ENCODE measurements at regions of chr6 and their contacts with region 1.

Region 1: DNA sequence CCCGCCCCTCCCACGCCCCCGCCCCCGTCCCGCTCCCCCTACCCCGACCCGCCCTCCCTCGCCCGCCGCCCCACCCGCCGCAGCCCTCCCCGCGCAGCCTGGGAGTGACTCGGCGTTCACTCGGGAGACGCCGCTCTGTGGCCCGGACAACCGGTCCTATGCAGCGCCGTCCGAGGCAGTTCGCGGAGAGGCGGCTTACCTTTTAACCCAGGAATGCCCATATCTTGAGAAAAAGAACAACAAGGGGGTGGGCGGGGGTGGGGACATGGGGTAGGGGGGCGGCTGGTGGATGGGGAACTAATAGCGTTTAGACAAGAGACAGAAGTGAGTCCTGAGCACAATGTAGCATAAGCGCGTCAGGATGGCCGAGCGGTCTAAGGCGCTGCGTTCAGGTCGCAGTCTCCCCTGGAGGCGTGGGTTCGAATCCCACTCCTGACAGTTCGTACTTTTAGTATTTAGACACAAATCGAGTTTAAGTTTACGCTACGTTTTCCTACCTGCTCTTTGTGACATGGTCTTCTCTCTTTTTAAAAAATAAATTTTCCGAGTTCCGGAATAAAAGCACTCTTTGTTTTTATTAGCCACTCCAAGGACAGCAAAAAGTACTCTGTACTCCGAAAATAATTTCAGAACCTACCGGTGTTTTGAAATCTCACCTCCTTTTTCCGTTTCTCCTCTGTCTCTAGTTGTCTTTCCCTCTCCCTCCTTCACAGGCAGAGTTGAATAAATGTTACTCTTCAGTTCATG is 17.1 kb upstream of the HMGN4 start:
- DNase-seq: peak; percentile 91
- H3K4me3 ChIP-seq: peak overlapping the region; percentile 72
- H3K27ac ChIP-seq: peak overlapping the region; percentile 84
- H3K4me1 ChIP-seq: peaks cover 36% of the 10 kb centered on the region
- CTCF ChIP-seq: no peak

Region 2: GRCh38 chr6:26457806-26458688 is 63.0 kb before region 1 on chr6 and contains the start of gene BTN2A1:
- CTCF ChIA-PET with region 1: no interaction called
- POLR2A ChIA-PET with region 1: no interaction called
- intact Hi-C with region 1: loop called (anchors 2 kb)
- DNase-seq: peak; percentile 91
- H3K4me3 ChIP-seq: peak within 1 kb of the TSS; percentile 76
- H3K27ac ChIP-seq: peak within 1 kb of the TSS; percentile 54
- H3K4me1 ChIP-seq: peaks cover 48% of the 10 kb centered on the region
- CTCF ChIP-seq: peak; percentile 49
- total RNA-seq, gene BTN2A1: 15.4 and 22.8 TPM in 2 replicates

Region 3: GRCh38 chr6:26473758-26474438 is 47.1 kb before region 1 on chr6:
- CTCF ChIA-PET with region 1: interaction called, 3 read pairs
- POLR2A ChIA-PET with region 1: interaction called, 6 read pairs
- intact Hi-C with region 1: loop called (anchors 2 kb)
- DNase-seq: peak; percentile 95
- H3K4me3 ChIP-seq: peak overlapping the region; percentile 73
- H3K27ac ChIP-seq: peak overlapping the region; percentile 96
- H3K4me1 ChIP-seq: peaks cover 55% of the 10 kb centered on the region
- CTCF ChIP-seq: no peak

Region 4: DNA sequence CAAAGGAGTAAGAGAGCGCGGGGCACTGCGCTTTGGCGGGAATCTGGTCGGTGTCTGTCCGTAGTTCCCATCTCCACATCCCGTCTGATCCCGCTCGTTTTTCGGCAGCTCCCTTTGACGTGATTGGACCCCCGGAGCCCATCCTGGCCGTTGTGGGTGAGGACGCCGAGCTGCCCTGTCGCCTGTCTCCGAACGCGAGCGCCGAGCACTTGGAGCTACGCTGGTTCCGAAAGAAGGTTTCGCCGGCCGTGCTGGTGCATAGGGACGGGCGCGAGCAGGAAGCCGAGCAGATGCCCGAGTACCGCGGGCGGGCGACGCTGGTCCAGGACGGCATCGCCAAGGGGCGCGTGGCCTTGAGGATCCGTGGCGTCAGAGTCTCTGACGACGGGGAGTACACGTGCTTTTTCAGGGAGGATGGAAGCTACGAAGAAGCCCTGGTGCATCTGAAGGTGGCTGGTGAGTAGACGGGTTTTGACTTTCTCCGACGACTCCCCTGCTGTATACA is 19.5 kb before region 1 on chr6:
- CTCF ChIA-PET with region 1: interaction called, 4 read pairs
- POLR2A ChIA-PET with region 1: interaction called, 21 read pairs
- intact Hi-C with region 1: no loop called
- DNase-seq: no peak
- H3K4me3 ChIP-seq: peak overlapping the region; percentile 53
- H3K27ac ChIP-seq: peak overlapping the region; percentile 98
- H3K4me1 ChIP-seq: peaks cover 68% of the 10 kb centered on the region
- CTCF ChIP-seq: no peak

Region 5: GRCh38 chr6:26532699-26533531 is 11.9 kb after region 1 on chr6:
- CTCF ChIA-PET with region 1: interaction called, 3 read pairs
- POLR2A ChIA-PET with region 1: interaction called, 11 read pairs
- intact Hi-C with region 1: loop called (anchors 1 kb)
- DNase-seq: peak; percentile 90
- H3K4me3 ChIP-seq: peak overlapping the region; percentile 69
- H3K27ac ChIP-seq: peak overlapping the region; percentile 93
- H3K4me1 ChIP-seq: peaks cover 47% of the 10 kb centered on the region
- CTCF ChIP-seq: no peak

Region 6: DNA sequence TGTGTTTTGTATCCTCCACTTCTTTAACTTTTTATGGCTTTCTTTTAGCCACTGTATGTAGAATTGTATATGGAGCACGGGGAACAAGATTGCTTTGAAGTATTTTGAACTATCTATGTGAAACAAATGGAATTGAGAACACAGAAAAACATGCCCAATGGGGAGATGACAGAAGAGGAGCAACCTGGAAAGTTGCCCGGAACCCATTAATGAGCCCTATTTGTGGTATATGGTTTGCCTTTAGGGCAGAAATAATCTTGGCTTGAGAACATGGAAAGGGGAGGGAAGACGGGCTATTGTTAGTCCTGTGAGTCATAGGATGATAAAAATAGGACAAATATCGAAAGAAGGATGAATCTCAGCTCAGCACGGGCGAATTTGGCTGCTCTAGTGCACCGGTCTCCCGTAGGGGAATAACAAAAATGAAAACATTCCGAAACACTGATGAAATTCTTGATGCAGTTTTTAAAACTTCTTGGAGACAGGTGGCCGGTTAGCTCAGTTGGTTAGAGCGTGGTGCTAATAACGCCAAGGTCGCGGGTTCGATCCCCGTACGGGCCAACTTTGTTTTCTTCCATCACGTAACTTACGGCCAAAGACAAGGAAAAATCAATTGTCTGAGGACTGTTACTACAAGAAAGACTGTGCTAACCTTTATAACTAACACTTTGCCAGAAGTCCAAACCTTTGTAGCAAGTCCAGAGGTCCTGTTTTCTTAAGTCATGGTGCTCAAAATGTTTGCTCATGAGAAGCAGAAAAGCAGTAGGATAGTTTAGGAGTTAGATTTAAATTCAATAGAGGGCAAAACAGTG is 32.8 kb after region 1 on chr6:
- CTCF ChIA-PET with region 1: no interaction called
- POLR2A ChIA-PET with region 1: interaction called, 3 read pairs
- intact Hi-C with region 1: loop called (anchors 1 kb)
- DNase-seq: peak; percentile 84
- H3K4me3 ChIP-seq: peak overlapping the region; percentile 80
- H3K27ac ChIP-seq: peak overlapping the region; percentile 91
- H3K4me1 ChIP-seq: peaks cover 62% of the 10 kb centered on the region
- CTCF ChIP-seq: no peak

Region 7: DNA sequence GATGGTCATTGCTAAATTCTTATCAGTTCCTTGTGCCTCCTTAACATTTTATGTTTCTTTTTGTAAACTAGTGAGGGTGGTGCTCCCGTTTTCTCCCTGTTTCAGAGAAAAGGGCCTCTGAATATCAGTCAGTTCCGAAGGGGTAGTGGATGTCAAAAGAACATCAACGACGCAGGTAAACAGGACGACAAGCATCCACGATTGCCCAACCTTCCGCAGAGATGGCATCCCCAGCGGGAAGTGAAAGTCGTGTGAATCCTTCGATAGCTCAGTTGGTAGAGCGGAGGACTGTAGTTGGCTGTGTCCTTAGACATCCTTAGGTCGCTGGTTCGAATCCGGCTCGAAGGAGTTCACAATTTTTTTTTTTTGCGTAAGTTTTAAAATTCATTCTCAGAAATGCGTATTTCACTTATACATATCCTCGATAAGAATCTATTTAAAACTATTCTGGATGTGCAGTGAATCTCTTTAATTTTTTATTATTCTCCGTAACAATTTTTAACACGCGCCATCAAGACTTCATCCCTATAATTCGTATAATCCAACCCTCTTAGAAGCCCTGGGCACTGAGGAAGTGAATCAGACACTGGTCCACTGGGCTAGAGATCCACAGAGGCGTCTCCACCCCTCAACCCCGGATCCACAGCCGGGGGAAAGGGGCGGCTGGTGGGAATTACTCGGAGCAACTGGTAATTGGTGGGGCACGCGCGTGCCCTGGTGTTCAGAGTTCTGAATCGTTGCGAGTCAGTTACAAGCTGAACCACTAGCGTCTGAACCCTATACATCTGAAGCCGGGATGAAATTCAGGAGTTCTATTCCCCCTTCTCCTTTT is 47.8 kb after region 1 on chr6:
- CTCF ChIA-PET with region 1: no interaction called
- POLR2A ChIA-PET with region 1: no interaction called
- intact Hi-C with region 1: loop called (anchors 1 kb)
- DNase-seq: peak; percentile 92
- H3K4me3 ChIP-seq: peak overlapping the region; percentile 82
- H3K27ac ChIP-seq: peak overlapping the region; percentile 29
- H3K4me1 ChIP-seq: peaks cover 24% of the 10 kb centered on the region
- CTCF ChIP-seq: peak; percentile 23; the same call in 1 of the 2 replicates